Astrocyte of the cerebellum (primary cell): ENCODE measurements at regions of chr11 and their contacts with region 1.

Region 1: GRCh38 chr11:121039971-121040613 is 16.2 kb downstream of the TBCEL start:
- DNase-seq: no peak
- H3K4me3 ChIP-seq: no peak overlapping the region
- CTCF ChIP-seq: no peak

Region 2: DNA sequence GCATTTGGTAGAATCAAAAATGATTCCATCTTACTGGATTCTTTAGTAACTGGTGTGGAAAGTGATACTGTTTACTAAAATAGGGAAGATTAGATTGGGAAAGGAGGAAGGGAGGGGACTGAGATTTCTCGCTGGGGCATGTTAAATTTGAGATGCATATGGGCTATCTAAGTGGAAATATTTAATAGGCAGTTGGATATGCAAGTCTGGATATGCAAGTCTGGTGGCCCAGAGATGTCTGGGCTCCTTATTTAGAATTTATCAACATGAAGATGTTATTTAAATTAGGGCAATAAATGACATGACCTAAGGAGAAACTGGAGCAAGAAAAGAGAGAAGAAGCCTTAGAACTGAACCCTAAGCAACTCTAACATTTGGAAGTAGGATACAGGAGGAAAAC is 33.2 kb before region 1 on chr11:
- in situ Hi-C with region 1: loop called (anchors 5 kb)
- DNase-seq: no peak
- H3K4me3 ChIP-seq: no peak overlapping the region
- CTCF ChIP-seq: no peak

Region 3: DNA sequence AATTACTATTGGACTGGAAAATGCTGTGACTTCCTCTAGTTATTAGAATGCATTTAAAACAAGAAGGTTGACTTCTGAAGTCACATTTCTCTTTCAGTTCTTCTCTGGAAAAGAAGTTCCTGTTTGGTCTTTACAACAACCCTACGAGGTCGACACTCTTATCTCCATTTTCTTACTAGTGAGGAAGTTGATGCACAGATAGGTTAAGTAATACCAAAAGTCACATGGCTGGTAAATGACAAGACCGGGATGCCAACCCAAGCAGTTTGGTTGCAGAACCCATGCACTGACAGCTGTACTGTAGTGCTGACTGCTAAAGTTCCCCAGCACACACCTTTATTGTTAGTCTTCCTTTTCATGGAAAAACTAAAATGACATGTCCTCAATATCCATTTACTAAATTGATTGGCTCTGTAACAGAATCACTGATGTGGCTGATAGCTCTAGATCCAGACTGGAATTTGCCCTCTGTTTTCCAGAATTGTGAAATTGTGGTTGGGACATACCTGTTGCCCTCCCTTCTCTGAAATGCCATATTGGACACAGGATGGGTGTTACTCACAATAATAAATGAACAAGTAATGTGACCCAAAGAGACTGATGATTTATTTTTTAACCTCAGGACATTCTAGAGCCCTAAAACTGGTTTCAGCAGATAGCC is 51.5 kb after region 1 on chr11:
- in situ Hi-C with region 1: loop called (anchors 5 kb)
- DNase-seq: no peak
- H3K4me3 ChIP-seq: no peak overlapping the region
- CTCF ChIP-seq: no peak

Region 4: GRCh38 chr11:121207485-121208115 is 167.5 kb after region 1 on chr11:
- in situ Hi-C with region 1: no loop called
- DNase-seq: no peak
- H3K4me3 ChIP-seq: no peak overlapping the region
- CTCF ChIP-seq: no peak